ENCODE measurements at regions of chr4 and their contacts with region 1.

Region 1: GRCh38 chr4:91113130-91113706 is 986.0 kb downstream of the CCSER1 start:
- DNase-seq: no peak
- H3K4me3 Mint-ChIP-seq: no peak overlapping the region
- H3K27ac Mint-ChIP-seq: no peak overlapping the region
- H3K4me1 Mint-ChIP-seq: no peaks in the 10 kb centered on the region
- H3K27me3 Mint-ChIP-seq: no peaks in the 10 kb centered on the region
- CTCF ChIP-seq: peak; percentile 39

Region 2: GRCh38 chr4:90357117-90357710 is 756.0 kb before region 1 on chr4:
- CTCF ChIA-PET with region 1: no interaction called
- intact Hi-C with region 1: loop called (anchors 2 kb)
- DNase-seq: no peak
- H3K4me3 Mint-ChIP-seq: no peak overlapping the region
- H3K27ac Mint-ChIP-seq: no peak overlapping the region
- H3K4me1 Mint-ChIP-seq: no peaks in the 10 kb centered on the region
- H3K27me3 Mint-ChIP-seq: no peaks in the 10 kb centered on the region
- CTCF ChIP-seq: peak; percentile 42

Region 3: GRCh38 chr4:90876296-90876695 is 236.9 kb before region 1 on chr4:
- CTCF ChIA-PET with region 1: no interaction called
- intact Hi-C with region 1: no loop called
- DNase-seq: no peak
- H3K4me3 Mint-ChIP-seq: no peak overlapping the region
- H3K27ac Mint-ChIP-seq: no peak overlapping the region
- H3K4me1 Mint-ChIP-seq: no peaks in the 10 kb centered on the region
- H3K27me3 Mint-ChIP-seq: no peaks in the 10 kb centered on the region
- CTCF ChIP-seq: no peak

Region 4: GRCh38 chr4:90990284-90990683 is 122.9 kb before region 1 on chr4:
- CTCF ChIA-PET with region 1: no interaction called
- intact Hi-C with region 1: no loop called
- DNase-seq: no peak
- H3K4me3 Mint-ChIP-seq: no peak overlapping the region
- H3K27ac Mint-ChIP-seq: no peak overlapping the region
- H3K4me1 Mint-ChIP-seq: no peaks in the 10 kb centered on the region
- H3K27me3 Mint-ChIP-seq: no peaks in the 10 kb centered on the region
- CTCF ChIP-seq: no peak

Region 5: DNA sequence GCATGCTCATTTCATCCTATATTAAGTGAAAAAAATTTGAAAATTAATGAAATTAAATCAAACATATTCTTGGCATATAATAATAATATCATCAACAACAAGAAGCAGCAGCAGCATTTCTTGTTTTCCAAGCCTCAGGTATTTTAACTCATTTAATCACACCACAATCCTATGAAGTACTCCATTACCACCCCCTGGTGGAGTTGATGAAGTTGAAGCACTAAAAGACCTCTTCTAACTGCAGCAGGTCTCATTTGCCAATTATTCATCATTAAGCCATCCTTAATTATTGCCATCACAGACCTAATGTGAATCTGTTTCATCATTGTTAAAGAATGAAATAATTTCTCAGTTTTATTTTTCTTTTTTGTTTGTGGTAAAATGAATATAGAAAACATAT is 389.1 kb after region 1 on chr4:
- CTCF ChIA-PET with region 1: no interaction called
- intact Hi-C with region 1: loop called (anchors 2 kb)
- DNase-seq: peak; percentile 19
- H3K4me3 Mint-ChIP-seq: no peak overlapping the region
- H3K27ac Mint-ChIP-seq: no peak overlapping the region
- H3K4me1 Mint-ChIP-seq: no peaks in the 10 kb centered on the region
- H3K27me3 Mint-ChIP-seq: no peaks in the 10 kb centered on the region
- CTCF ChIP-seq: peak; percentile 31

Region 6: GRCh38 chr4:92299152-92299551 is 1185.9 kb after region 1 on chr4:
- CTCF ChIA-PET with region 1: no interaction called
- intact Hi-C with region 1: loop called (anchors 5 kb)
- DNase-seq: no peak
- H3K4me3 Mint-ChIP-seq: no peak overlapping the region
- H3K27ac Mint-ChIP-seq: no peak overlapping the region
- H3K4me1 Mint-ChIP-seq: no peaks in the 10 kb centered on the region
- H3K27me3 Mint-ChIP-seq: peaks cover 8% of the 10 kb centered on the region
- CTCF ChIP-seq: no peak

Measured in Calu3 (cell line).